Naive thymus-derived CD4-positive, alpha-beta T cell (primary cell): ENCODE measurements at regions of chr13 and their contacts with region 1.

Region 1: GRCh38 chr13:30388406-30389283 is 33.6 kb upstream of the UBE2L5 start:
- DNase-seq: no peak
- ATAC-seq: peak; percentile 13
- H3K4me3 ChIP-seq: peak overlapping the region; percentile 41
- H3K4me3 Mint-ChIP-seq: peak overlapping the region; percentile 67 to 93 (median 78)
- H3K27ac ChIP-seq: peak overlapping the region; percentile 51
- H3K27ac Mint-ChIP-seq: peak overlapping the region; percentile 68 to 95 (median 90)
- H3K4me1 ChIP-seq: peaks cover 6 to 40% of the 10 kb centered on the region in 2 donors
- H3K4me1 Mint-ChIP-seq: peaks cover 26 to 68% (median 57%) of the 10 kb centered on the region in 7 donors
- H3K27me3 ChIP-seq: no peaks in the 10 kb centered on the region
- H3K27me3 Mint-ChIP-seq: no peaks in the 10 kb centered on the region

Region 2: GRCh38 chr13:29923554-29924481 is 464.8 kb before region 1 on chr13:
- CTCF ChIA-PET with region 1: no interaction called
- POLR2A ChIA-PET with region 1: no interaction called
- intact Hi-C with region 1: no loop called
- DNase-seq: peak in 5 of 9 donors; percentile 20 to 55 (median 21)
- ATAC-seq: peak; percentile 86
- H3K4me3 ChIP-seq: no peak overlapping the region
- H3K4me3 Mint-ChIP-seq: no peak overlapping the region
- H3K27ac ChIP-seq: no peak overlapping the region
- H3K27ac Mint-ChIP-seq: peak overlapping the region in 1 of 9 donors; percentile 32
- H3K4me1 ChIP-seq: no peaks in the 10 kb centered on the region
- H3K4me1 Mint-ChIP-seq: peaks cover 0 to 36% (median 13%) of the 10 kb centered on the region in 7 donors
- H3K27me3 ChIP-seq: no peaks in the 10 kb centered on the region
- H3K27me3 Mint-ChIP-seq: peaks cover 0 to 3% (median under 1%) of the 10 kb centered on the region in 5 donors

Region 3: GRCh38 chr13:30332456-30333143 is 56.0 kb before region 1 on chr13:
- CTCF ChIA-PET with region 1: no interaction called
- POLR2A ChIA-PET with region 1: no interaction called
- intact Hi-C with region 1: no loop called
- DNase-seq: no peak
- ATAC-seq: no peak
- H3K4me3 ChIP-seq: no peak overlapping the region
- H3K4me3 Mint-ChIP-seq: no peak overlapping the region
- H3K27ac ChIP-seq: no peak overlapping the region
- H3K27ac Mint-ChIP-seq: no peak overlapping the region
- H3K4me1 ChIP-seq: peaks cover 0 to 8% of the 10 kb centered on the region in 2 donors
- H3K4me1 Mint-ChIP-seq: peaks cover 5 to 32% (median 19%) of the 10 kb centered on the region in 7 donors
- H3K27me3 ChIP-seq: no peaks in the 10 kb centered on the region
- H3K27me3 Mint-ChIP-seq: peaks cover 0 to 3% (median 0%) of the 10 kb centered on the region in 5 donors

Region 4: DNA sequence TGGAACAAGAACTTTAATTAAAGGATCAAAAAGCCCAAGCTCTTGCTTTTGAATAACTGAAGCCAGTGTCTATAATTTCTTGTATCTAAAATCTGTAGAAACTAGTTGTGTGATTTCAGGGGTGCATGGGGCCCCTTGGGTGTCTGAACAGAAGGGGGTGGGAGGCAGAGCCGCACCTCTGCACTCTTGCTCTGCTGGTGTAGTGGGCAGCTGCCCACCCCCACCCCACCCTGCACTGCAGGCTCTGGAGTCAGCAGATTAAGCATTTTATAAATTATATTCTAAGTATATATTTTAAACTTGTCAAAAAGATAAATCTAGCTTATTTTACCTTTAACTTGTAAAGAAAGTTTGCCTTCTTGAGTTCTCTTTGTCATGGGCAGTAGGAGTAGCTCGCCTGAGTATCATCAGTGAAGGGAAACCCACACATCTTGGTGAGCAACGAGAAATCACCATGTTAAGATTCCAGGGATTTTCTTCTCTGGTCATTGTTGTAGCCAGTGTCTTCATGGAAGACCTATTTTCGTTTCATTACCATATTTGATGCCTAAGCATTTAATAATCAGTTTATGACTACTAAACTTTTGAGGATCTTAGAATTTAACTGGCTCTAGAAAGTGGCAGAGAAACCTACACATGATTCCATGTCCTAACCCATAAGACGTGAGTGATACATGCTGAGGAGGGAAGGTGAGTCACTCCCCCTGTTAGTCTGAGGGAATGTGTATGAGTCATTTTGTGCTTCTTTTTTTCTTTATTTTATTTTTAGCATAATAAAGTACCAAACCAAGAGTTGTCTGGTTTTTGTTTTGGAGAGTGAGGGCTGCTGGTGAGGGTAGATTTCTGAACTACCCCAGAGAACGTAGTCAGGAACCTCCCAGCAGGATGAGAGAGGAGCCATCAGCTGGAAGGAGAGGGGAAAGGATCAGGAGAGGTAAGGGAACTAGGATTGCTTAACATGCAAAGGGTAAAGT is 41.4 kb after region 1 on chr13:
- CTCF ChIA-PET with region 1: no interaction called
- POLR2A ChIA-PET with region 1: no interaction called
- intact Hi-C with region 1: no loop called
- DNase-seq: no peak
- ATAC-seq: peak; percentile 81
- H3K4me3 ChIP-seq: no peak overlapping the region
- H3K4me3 Mint-ChIP-seq: peak overlapping the region in 2 of 10 donors; percentile 53 to 64
- H3K27ac ChIP-seq: no peak overlapping the region
- H3K27ac Mint-ChIP-seq: peak overlapping the region in 3 of 9 donors; percentile 20 to 76 (median 74)
- H3K4me1 ChIP-seq: no peaks in the 10 kb centered on the region
- H3K4me1 Mint-ChIP-seq: peaks cover 4 to 32% (median 8%) of the 10 kb centered on the region in 7 donors
- H3K27me3 ChIP-seq: no peaks in the 10 kb centered on the region
- H3K27me3 Mint-ChIP-seq: no peaks in the 10 kb centered on the region

Region 5: DNA sequence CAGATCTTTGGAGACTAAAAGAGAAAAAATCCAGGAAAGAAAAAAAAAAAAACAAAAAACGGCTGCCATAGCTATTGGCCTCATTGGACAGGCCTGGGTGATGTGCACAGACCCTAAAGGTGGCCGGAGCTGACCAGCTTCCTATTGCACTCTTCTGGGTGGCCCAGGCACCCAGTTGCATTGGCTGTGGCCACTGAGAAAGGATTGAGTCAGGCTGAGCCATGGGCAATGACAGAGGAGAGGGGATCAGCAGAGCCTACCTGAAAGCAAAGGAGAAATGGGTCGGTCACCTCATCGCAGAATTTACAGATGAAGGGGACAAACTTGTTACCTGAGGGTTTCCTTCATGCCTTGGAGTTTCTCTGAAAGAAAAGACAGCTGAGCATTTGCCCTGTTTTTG is 59.8 kb after region 1 on chr13:
- CTCF ChIA-PET with region 1: interaction called, 4 read pairs
- POLR2A ChIA-PET with region 1: interaction called, 11 read pairs
- intact Hi-C with region 1: no loop called
- DNase-seq: no peak
- ATAC-seq: no peak
- H3K4me3 ChIP-seq: no peak overlapping the region
- H3K4me3 Mint-ChIP-seq: no peak overlapping the region
- H3K27ac ChIP-seq: no peak overlapping the region
- H3K27ac Mint-ChIP-seq: no peak overlapping the region
- H3K4me1 ChIP-seq: peaks cover 0 to 11% of the 10 kb centered on the region in 2 donors
- H3K4me1 Mint-ChIP-seq: peaks cover 0 to 14% (median 10%) of the 10 kb centered on the region in 7 donors
- H3K27me3 ChIP-seq: peaks cover 0 to 4% of the 10 kb centered on the region in 2 donors
- H3K27me3 Mint-ChIP-seq: peaks cover 0 to 10% (median 0%) of the 10 kb centered on the region in 5 donors